IMR-90 (cell line): ENCODE measurements at regions of chr5 and their contacts with region 1.

Region 1: DNA sequence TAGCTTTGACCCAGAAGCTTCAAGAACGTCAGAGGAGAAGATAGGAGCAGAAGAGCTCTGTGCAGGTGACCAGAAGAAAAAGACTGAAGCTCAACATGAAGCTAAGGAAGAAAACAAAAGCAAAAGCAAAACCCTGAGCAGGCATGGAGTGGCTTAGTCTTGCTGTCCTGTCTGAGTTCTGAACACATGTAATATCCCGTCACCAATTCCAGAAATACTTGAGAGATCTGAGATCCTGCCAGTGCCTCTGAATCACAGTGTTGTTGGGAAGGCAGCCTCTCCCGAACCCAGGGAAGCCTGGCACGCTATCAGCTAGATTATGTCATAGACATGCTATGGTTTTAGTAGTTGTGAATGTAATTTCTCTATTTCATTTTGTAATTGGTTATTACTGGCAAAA is 235.7 kb downstream of the ICE1 start:
- DNase-seq: no peak
- ATAC-seq: no peak
- H3K4me3 ChIP-seq: no peak overlapping the region
- H3K27ac ChIP-seq: no peak overlapping the region
- H3K4me1 ChIP-seq: no peaks in the 10 kb centered on the region
- H3K27me3 ChIP-seq: no peaks in the 10 kb centered on the region
- CTCF ChIP-seq: no peak
- POLR2A ChIP-seq: no peak
- RAD21 ChIP-seq: no peak

Region 2: GRCh38 chr5:5583023-5583765 is 75.0 kb before region 1 on chr5:
- CTCF ChIA-PET with region 1: no interaction called
- POLR2A ChIA-PET with region 1: no interaction called
- dilution Hi-C with region 1: no loop called
- in situ Hi-C with region 1: no loop called
- intact Hi-C with region 1: loop called (anchors 2 kb)
- DNase-seq: no peak
- ATAC-seq: no peak
- H3K4me3 ChIP-seq: no peak overlapping the region
- H3K27ac ChIP-seq: no peak overlapping the region
- H3K4me1 ChIP-seq: no peaks in the 10 kb centered on the region
- H3K27me3 ChIP-seq: no peaks in the 10 kb centered on the region
- CTCF ChIP-seq: no peak
- POLR2A ChIP-seq: no peak
- RAD21 ChIP-seq: no peak

Region 3: DNA sequence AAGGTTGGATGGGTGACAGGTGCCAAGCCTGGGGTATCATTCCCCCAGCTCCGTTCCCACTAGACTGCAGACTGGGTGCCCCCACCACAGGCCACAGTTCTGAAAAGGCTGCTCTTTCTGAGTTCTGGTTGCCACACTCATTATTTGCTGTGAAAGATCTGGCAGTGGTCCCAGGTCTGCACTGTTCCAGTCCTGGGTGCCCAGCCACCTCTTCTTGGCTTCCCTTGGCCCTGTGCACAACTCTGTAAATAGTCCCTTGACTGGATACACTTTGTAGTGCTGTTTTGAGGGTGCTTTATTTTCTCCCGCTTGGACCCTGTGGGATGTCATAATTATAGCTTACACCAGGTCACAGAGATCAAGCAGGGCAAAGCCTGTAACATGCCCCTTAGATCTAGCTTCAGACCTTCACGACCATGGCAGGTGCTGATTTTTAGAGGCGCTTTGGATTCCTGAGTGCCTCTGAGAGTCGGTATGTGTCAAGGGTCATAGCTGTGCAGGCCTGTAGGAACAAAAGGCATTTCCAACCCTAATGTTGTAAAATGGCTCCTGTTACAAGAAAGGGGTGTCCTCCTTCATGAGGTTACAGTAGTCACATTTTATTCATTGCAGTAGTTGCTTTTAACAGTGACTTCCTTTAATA is 109.2 kb after region 1 on chr5:
- CTCF ChIA-PET with region 1: no interaction called
- POLR2A ChIA-PET with region 1: no interaction called
- dilution Hi-C with region 1: no loop called
- in situ Hi-C with region 1: no loop called
- intact Hi-C with region 1: no loop called
- DNase-seq: no peak
- ATAC-seq: no peak
- H3K4me3 ChIP-seq: no peak overlapping the region
- H3K27ac ChIP-seq: no peak overlapping the region
- H3K4me1 ChIP-seq: no peaks in the 10 kb centered on the region
- H3K27me3 ChIP-seq: no peaks in the 10 kb centered on the region
- CTCF ChIP-seq: no peak
- POLR2A ChIP-seq: no peak
- RAD21 ChIP-seq: no peak